GM10248 (cell line): ENCODE measurements at regions of chr13 and their contacts with region 1.

Region 1: DNA sequence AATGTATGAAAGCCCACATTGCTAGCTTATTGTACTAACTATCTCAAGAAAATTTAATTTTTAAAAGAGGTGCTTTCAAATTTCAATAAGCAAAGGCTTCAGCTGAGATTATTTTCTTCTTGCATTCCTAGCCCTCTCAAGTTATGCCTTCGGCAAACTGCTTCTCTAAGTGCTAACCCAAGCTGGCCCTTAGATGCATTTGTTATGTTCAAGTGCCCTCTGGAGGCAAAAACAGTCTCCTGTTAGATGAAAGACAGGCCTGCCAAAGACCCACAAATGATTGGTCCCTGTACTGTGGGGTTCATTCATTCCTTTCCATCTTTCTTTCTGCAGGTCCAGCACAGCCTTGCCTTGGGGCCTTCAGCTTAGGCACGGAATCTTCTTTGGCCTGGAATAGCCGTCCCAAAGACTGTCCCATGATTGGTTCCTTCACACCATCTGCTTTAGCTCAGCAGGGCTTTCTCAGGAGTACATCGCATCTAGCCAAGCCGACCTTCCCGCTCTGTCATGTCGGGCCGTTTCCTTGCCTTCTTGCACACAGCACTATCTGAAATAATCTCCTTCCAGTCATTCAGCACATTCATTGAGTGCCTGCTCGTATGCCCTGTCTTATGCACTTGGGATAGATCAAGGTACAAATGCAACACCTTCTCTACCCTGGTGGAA is 26.4 kb upstream of the TPTE2 start:
- DNase-seq: peak; percentile 50
- CTCF ChIP-seq: peak; percentile 62

Region 2: DNA sequence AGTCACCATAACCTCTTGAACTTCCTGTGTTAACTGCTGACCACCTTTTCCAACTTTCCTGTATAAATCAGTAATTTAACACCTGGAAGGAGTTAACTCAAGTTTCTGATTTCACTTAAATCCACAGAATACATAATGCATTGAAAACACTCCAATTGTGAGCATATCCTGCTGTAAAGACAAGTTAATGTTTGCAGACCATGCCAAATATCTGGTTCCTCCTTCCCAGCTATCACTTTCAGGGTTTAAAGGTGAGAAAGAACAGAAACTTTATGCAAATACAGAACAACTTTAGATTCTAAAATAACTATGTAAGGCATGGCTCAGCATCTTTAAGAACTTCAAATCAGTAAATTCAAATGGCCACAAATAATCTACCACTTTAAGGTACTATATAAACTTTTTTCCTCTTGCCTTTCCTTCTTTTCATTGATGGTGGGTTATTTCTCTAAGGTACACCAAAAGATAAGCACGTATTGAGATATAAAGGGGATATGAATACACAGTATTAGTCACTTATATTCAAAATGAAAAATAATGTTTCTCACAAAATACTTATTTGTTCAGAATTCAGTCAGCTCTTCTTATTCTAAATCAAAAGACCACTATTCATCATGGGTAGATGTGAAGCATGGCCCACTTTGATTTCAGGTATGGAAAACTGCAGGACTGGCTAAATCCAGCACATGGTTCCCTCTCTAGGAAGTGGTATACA is 19.8 kb before region 1 on chr13:
- CTCF ChIA-PET with region 1: interaction called, 23 read pairs
- POLR2A ChIA-PET with region 1: no interaction called
- DNase-seq: peak; percentile 36
- CTCF ChIP-seq: no peak

Region 3: GRCh38 chr13:19601749-19602725 is 14.3 kb after region 1 on chr13:
- CTCF ChIA-PET with region 1: interaction called, 14 read pairs
- POLR2A ChIA-PET with region 1: no interaction called
- DNase-seq: peak; percentile 78
- CTCF ChIP-seq: peak; percentile 29

Region 4: GRCh38 chr13:19624265-19624664 is 36.5 kb after region 1 on chr13:
- CTCF ChIA-PET with region 1: no interaction called
- POLR2A ChIA-PET with region 1: no interaction called
- DNase-seq: no peak
- CTCF ChIP-seq: no peak